ENCODE measurements at regions of chr2 and their contacts with region 1.

Region 1: DNA sequence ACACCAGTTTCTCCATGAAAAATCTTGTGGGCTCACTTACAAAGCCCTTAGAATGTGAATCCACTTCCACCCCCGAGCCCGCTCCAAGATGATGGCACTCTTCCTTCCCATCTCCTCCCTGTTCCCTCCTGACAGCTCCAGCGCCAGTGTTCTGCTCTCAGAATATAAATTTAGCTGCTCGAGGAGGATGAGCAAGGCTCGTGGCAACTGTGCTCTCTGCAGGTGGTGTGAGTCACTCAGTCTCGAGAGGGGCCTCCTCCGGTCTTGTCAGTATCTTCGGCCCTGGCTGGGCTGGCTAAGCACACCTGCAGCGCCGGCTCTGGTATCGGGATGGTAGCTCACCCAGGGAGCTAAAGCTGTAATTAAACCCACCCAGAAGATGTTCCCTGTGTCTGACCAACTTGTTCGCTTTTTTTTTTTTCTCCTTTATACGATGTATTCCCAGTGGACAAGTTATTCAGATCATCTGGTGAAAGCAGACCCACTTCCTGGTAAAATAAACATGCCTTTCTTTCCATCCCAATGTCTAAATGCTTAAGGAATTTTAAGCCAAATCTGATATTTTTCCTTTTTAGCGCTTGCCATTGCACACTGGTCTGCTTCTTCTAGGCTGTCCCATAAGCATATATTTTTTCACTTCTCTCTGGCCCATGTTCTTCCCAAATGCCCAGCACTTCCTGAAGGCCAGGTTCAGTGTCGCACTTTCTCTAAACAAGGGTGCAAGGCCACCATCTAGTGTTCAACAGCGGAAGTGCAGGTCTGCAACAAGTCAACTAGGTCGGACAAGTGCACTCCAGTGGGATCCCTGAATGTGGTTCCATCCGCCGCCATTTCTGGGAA is 31.4 kb upstream of the YPEL5 start:
- DNase-seq: peak; percentile 73
- ATAC-seq: peak; percentile 83 to 87

Region 2: GRCh38 chr2:29940706-29941105 is 174.7 kb before region 1 on chr2:
- intact Hi-C with region 1: no loop called
- DNase-seq: peak; percentile 53
- ATAC-seq: peak; percentile 92 to 95

Region 3: DNA sequence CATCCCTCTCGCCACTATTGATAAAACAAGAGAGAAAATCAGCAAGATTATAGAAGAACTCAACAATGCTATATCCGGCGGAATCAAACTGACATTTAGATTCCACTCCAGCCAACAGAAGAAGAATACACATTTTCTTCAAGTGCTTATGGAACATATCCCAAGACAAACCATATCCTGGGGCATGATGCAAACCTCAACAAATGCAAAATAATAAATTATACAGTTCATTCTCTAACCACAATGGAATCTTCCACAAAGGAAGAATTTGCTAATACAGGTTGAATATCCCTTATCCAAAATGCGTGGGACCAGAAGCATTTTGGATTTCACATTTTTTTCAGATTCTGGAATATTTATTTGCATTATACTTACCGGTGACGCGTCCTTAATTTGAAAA is 20.0 kb before region 1 on chr2:
- intact Hi-C with region 1: loop called in 1 of 2 experiments (anchors 1 kb)
- DNase-seq: no peak
- ATAC-seq: no peak